Activated CD4-positive, alpha-beta T cell treated with anti-CD3 and anti-CD28 coated beads, Interleukin-2, amount 10 ng/mL, durations not matched to agents 24 days and 14 days (primary cell): ENCODE measurements at regions of chr1 and their contacts with region 1.

Region 1: DNA sequence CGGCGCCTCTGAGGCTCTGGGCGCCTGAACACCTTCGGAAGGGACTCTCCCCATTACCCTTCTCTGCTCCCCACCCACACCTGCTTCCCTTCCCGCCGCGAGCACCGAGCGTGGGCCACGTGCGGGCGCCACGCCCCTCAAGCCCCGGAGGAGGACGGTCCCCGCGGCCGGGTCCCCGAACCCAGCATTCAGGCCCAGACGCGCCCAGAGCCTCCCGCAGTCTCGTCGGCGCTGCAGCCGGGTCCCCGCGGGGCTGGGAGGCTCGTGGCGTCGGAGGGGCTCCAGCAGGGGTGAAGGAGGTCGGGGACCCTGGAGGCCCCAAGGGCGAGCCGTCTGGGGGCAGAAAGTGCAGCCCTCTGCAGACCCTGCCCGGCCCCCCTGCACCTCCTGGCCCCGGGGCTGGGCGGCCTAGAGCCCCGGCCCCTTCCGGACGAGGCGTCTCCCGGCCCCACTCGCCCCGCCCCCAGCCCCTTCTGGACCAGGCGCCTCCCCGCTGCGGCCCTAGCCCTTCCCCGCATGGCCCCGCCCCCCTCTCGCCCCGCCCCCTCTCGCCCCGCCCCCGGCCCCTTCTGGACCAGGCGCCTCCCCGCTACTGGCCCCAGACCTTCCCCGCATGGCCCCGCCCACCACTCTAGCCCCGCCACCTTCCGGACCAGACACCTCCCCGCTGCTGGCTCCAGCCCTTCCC is 378 bp upstream of the SMIM1 start:
- DNase-seq: peak; percentile 95
- H3K4me3 Mint-ChIP-seq: peak overlapping the region; percentile 81
- H3K27ac Mint-ChIP-seq: peak overlapping the region; percentile 58
- H3K4me1 Mint-ChIP-seq: peaks cover 9% of the 10 kb centered on the region
- H3K27me3 Mint-ChIP-seq: no peaks in the 10 kb centered on the region

Region 2: DNA sequence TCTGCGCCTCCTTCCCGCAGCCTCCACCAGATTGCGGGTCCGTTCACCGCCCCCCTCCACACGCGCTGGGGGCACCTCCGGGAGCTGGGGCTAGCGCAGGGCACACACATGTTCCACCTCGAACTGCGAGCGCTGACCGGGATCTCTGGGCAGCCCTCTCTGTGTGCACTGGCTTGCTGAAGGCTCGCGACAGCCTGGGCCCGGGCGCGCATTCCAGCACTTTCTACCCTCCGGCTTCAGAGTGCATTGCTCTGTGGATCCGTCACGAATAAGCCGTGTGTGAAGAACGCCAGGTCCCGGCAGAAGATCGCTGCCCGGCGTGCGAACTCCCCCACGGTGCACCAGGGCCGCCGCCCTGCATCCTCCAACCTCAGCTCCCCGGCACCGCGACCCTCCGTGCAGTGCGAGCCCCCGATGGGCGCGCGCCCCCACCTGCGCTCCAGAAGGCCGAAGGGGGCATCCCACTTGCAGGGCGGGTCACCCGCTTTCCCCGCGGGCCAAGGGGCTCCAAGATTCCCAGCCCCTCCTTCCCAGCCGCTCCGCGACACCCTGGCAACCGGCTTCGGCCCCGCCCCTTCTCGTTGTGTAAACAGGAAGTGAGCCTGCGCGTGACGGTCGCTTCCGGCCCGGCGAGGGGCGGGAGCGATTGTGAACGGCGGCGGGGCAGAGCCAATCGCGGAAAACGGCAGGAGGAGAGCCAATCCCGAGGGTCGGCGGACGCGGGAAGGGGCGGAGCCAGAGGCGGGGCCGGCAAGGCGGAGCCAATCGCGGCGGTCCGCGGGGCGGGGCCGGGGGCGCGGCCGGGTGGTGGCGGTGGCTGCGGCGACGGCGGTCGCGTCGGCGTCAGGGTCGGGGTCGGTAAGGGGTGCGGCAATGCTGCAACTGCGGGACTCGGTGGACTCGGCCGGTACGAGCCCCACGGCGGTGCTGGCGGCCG is 147.7 kb before region 1 on chr1 and contains the start of gene TPRG1L:
- intact Hi-C with region 1: loop called (anchors 1 kb)
- DNase-seq: peak; percentile 100
- H3K4me3 Mint-ChIP-seq: peak within 1 kb of the TSS; percentile 94
- H3K27ac Mint-ChIP-seq: peak within 1 kb of the TSS; percentile 70
- H3K4me1 Mint-ChIP-seq: peaks cover 25% of the 10 kb centered on the region
- H3K27me3 Mint-ChIP-seq: peaks cover 5% of the 10 kb centered on the region
- total RNA-seq, gene TPRG1L: 8.6 and 9.7 TPM in 2 replicates

Region 3: DNA sequence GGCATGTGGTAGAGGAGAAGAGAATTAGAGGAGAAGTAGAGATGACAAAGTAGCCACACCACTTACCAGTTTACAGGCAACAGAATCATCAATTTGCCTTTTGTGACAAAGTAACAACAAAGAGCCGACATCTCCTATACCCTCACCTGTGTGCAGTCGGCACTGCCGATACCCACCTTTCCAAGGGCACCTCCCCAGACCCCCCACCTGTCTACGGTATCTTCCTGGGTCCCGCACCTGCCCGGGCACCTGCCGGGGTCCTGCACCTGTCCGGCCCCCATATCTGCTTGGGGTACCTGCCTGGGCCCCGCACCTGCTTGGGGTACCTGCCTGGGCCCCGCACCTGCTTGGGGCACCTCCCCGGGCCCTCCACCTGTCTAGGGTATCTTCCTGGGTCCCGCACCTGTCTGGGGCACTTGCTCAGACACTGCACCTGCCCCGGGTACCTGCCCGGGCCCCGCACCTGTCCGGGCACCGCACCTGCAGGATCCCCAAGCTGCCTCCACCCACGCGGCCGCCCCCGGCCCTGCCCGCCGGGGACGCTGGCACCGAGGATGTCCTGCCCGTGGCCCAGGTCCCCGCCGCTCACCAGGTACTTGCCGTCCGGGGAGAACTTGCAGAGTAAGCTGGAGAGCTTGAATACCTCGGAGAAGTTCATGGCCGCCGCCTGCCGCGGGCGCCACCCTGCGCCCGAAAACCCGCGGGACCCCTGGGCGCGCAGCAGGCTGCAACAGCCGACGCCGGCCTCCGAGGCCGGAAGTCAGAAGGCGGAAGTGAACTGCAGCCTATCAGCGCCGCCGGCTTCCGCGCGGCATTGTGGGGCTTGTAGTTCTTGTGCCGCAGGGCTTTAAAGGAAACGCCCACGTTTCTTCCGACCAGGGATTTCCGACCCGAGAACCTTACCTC is 122.6 kb before region 1 on chr1 and contains the start of gene WRAP73:
- intact Hi-C with region 1: loop called (anchors 2 kb)
- DNase-seq: peak; percentile 97
- H3K4me3 Mint-ChIP-seq: peak within 1 kb of the TSS; percentile 80
- H3K27ac Mint-ChIP-seq: peak within 1 kb of the TSS; percentile 53
- H3K4me1 Mint-ChIP-seq: peaks cover 20% of the 10 kb centered on the region
- H3K27me3 Mint-ChIP-seq: peaks cover 26% of the 10 kb centered on the region
- total RNA-seq, gene WRAP73: 41.3 and 44.7 TPM in 2 replicates

Region 4: DNA sequence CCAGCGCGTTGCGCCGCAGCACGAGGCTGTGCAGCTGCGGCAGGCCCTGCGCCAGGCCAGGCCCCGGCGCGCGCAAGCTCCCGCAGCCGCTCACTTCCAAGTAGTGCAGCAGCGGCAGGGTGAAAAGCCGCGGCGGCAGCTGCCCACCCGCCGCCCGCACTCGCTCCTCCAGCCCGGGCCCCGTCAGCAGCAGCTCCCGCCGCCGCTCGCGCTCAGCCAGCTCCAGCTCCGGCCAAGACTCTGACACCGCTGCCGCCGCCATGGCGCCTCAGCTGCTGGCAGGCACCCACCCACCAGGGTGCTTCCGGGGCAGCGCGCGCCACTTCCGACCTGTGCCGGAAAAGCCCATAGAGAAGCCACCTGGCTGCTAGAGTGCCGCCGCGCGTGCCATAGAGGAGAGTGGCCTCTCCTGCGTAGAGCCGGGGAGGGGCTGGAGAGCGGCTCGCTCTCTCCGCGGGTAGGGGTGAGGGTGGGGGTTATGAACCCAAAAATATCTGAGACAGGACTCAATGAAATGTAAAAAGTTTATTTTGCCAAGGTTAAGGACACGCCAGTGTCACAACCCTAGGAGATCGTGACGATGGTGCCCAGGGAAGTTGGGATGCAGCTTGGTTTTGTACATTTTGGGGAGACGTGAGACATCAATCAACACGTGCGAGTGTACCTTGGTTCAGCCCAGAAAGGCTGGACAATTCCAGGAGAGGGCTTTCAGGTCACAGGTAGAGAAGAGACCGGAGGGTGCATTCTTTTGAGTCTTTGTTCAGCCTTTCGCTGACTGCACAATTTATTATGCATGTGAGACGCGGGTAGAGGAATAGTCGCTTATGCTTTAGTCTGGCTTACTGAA is 24.3 kb after region 1 on chr1 and contains the start of gene LRRC47:
- intact Hi-C with region 1: loop called (anchors 1 kb)
- DNase-seq: peak; percentile 99
- H3K4me3 Mint-ChIP-seq: peak within 1 kb of the TSS; percentile 88
- H3K27ac Mint-ChIP-seq: peak within 1 kb of the TSS; percentile 90
- H3K4me1 Mint-ChIP-seq: peaks cover 31% of the 10 kb centered on the region
- H3K27me3 Mint-ChIP-seq: peaks cover 10% of the 10 kb centered on the region
- total RNA-seq, gene LRRC47: 40.8 and 46.0 TPM in 2 replicates

Region 5: DNA sequence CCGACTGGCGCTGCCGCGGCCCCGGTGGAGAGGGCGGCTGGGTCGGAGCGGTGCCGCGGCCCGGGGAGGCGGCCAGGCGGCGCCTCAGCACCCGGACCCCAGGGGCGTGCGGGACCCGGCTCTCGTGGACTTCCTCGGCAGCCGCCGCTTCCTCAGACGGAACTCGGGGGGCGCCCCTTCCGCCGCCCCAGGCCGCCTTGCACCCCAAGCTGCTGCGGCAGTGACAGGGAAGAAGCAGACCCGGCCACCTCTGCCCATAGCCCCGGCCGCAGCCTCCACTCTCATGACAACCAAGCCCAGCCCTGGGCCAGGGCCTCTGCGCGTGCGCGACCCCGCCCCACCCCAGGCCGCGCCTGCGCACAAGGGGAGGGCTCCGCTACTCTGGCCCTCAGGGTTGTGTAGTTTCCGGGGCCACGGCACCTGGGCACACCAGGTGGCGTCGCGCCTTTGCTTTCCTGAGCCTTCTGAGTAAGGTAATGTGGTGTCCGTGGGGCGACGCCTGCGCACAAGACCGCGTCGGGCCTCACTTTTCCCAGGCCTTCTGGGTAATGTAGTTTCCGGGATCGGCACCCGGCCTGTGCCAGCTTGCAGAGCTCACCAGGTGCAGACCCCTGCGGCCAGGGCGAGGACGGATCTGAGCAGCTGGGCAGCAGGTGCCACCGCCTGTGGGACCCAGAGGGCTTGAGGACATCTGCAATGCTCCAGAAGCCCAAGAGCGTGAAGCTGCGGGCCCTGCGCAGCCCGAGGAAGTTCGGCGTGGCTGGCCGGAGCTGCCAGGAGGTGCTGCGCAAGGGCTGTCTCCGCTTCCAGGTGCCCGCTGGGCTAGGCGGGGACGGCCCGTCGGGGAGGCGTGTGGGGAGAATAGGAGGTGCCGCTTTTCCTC is 85.0 kb after region 1 on chr1 and contains the starts of genes CEP104 and DFFB:
- intact Hi-C with region 1: loop called (anchors 1 kb)
- DNase-seq: peak; percentile 99
- H3K4me3 Mint-ChIP-seq: peak within 1 kb of the TSS; percentile 96
- H3K27ac Mint-ChIP-seq: peak within 1 kb of the TSS; percentile 86
- H3K4me1 Mint-ChIP-seq: peaks cover 17% of the 10 kb centered on the region
- H3K27me3 Mint-ChIP-seq: no peaks in the 10 kb centered on the region
- total RNA-seq, gene CEP104: 46.2 and 48.1 TPM in 2 replicates
- total RNA-seq, gene DFFB: 15.0 and 15.9 TPM in 2 replicates

Region 6: DNA sequence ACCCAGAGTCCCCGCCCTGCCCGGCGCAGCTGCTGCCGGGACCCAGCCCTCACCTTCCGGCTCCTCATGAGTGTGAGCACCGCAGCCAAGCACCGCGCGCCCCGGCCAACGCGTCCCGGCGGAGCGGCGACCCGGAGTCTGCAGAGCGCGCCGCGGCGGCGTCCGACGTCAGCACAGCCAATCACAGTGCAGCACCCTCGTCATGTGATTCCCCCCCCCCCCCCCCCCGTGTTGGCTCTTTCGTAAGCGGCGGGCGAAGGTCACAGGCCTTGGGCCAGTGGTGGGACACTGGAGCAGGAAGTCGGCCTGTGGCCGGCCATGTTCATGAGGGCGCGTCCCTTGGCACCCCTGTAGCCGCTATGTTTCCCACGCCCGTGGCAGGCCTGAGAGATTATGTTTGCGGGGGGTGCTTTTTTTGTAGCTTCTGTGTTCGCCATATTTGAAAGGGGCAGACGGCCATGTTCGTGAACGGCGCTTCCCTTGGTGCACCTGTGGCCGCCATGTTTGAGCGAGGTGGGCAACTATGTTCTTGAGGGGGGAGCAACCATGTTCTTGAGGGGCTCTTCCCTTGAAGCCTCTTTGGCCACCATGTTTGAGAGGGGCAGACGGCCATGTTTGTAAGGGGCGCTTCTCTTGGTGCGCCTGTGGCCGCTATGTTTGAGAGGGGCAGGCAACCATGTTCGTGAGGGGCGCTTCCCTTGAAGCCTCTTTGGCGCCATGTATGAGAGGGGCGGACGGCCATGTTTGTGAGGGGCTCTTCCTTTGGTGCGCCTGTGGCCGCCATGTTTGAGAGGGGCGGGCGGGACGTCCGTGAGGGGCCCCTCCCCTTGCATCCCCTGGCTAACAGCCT is 128.2 kb after region 1 on chr1 and contains the start of gene C1orf174:
- intact Hi-C with region 1: loop called (anchors 1 kb)
- DNase-seq: peak; percentile 98
- H3K4me3 Mint-ChIP-seq: peak within 1 kb of the TSS; percentile 97
- H3K27ac Mint-ChIP-seq: peak within 1 kb of the TSS; percentile 96
- H3K4me1 Mint-ChIP-seq: peaks cover 42% of the 10 kb centered on the region
- H3K27me3 Mint-ChIP-seq: no peaks in the 10 kb centered on the region
- total RNA-seq, gene C1orf174: 50.5 and 51.5 TPM in 2 replicates